ENCODE measurements at regions of chr15 and their contacts with region 1.

Region 1: GRCh38 chr15:40098489-40099261 is 10.0 kb downstream of the BMF start:
- DNase-seq: peak; percentile 89
- H3K4me3 ChIP-seq: peak overlapping the region; percentile 47
- H3K27ac ChIP-seq: peak overlapping the region; percentile 85
- H3K4me1 ChIP-seq: peaks cover 91% of the 10 kb centered on the region
- CTCF ChIP-seq: no peak

Region 2: GRCh38 chr15:39878406-39878785 is 220.3 kb before region 1 on chr15:
- CTCF ChIA-PET with region 1: no interaction called
- POLR2A ChIA-PET with region 1: no interaction called
- intact Hi-C with region 1: no loop called
- DNase-seq: no peak
- H3K4me3 ChIP-seq: no peak overlapping the region
- H3K27ac ChIP-seq: no peak overlapping the region
- H3K4me1 ChIP-seq: no peaks in the 10 kb centered on the region
- CTCF ChIP-seq: no peak

Region 3: DNA sequence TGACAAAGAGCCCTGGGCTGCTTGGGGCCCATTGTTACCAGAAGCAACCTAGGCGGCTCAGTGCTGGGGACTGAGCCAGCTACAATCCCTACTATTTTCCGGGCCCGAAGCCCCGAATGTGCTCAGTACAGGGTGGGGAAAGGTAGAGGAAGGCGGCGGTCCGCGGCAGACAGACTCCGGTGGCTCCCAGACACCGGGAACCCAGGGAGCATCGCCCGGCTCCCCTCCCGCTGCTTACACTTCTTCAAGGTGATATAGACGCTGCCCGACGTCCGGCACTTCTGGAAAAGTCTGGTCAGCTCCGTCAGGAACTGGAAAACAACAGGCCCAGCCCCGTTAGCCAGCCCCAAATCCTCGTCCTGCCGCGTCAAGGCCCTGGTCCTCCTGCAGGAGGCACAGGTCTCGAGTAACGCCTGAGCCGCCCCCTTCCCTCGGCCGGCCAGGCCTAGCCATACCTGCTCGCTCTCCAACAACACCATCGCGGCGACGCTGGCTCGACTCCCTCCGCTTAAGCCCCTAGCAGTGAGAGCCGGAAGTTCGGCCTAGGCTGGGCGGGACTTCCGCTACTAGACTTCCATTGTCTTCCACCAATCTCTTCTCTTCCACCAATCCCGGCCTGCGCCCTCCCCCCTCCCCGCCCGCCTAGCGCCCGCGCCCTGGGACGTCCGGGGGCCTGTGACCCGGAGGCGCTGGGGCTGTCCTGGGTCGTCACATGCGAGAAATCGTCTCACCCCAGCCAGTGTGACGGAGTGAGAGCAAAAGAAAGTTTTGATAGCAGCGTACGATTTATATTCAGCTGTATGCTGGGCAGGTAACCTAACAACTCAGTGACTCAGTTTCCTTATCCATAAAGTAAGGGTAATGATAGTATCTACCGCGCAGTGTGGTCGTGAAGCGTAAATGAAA is 59.8 kb before region 1 on chr15 and contains the start of gene SRP14:
- CTCF ChIA-PET with region 1: no interaction called
- POLR2A ChIA-PET with region 1: interaction called, 14 read pairs
- intact Hi-C with region 1: no loop called
- DNase-seq: peak; percentile 96
- H3K4me3 ChIP-seq: peak within 1 kb of the TSS; percentile 94
- H3K27ac ChIP-seq: peak within 1 kb of the TSS; percentile 55
- H3K4me1 ChIP-seq: peaks cover 25% of the 10 kb centered on the region
- CTCF ChIP-seq: no peak
- total RNA-seq, gene SRP14: 188 and 250 TPM in 2 replicates

Region 4: GRCh38 chr15:40054605-40055545 is 43.8 kb before region 1 on chr15:
- CTCF ChIA-PET with region 1: interaction called, 7 read pairs
- POLR2A ChIA-PET with region 1: interaction called, 10 read pairs
- intact Hi-C with region 1: loop called (anchors 2 kb)
- DNase-seq: peak; percentile 86
- H3K4me3 ChIP-seq: peak overlapping the region; percentile 22
- H3K27ac ChIP-seq: peak overlapping the region; percentile 31
- H3K4me1 ChIP-seq: peaks cover 62% of the 10 kb centered on the region
- CTCF ChIP-seq: no peak

Region 5: GRCh38 chr15:40069178-40070165 is 29.2 kb before region 1 on chr15:
- CTCF ChIA-PET with region 1: interaction called, 3 read pairs
- POLR2A ChIA-PET with region 1: interaction called, 10 read pairs
- intact Hi-C with region 1: loop called (anchors 1 kb)
- DNase-seq: peak; percentile 73
- H3K4me3 ChIP-seq: peak overlapping the region; percentile 38
- H3K27ac ChIP-seq: no peak overlapping the region
- H3K4me1 ChIP-seq: peaks cover 39% of the 10 kb centered on the region
- CTCF ChIP-seq: no peak

Region 6: DNA sequence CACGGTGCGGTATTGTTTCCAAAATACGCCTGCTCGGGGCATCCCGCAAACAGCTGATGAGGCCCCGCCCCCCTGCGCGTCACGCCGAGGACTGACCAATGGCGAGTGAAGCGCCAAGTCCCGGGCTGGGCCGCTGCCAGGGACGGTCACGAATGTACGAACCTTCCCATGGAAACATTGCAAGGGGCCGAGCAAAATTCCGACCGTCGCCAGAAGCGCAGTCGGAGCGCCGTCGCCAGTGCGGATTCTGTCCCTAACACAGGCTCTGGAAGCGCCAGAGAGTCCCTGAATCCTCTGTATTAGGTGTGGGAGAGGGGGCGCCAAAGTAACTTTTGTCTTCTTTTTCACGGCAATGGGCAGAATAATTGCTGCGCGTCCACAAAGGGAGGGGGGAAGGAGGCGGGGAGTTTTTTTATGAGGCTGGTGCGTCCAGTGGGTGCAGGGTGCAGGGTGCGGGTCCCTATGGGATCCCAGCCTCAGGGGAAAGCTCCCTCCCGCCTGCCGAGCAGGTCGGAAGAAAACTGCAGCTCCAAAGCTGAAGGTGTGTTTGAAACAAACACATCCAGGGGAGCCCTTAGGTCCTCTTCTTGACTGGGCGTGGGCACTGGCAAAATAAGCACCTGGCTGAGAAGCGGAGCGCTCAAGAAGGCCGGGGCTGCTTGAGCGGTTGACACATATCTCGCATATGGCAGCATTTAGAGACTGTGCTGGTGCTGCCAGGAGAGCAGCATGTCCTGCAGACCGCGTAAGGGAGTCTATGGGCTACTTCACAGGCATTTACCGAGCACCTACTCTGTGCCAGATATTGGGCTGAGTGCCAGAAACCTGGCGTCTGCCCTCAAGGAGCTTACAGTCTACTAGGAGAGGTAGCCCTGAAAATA is 10.4 kb after region 1 on chr15 and contains the start of gene BMF:
- CTCF ChIA-PET with region 1: interaction called, 24 read pairs
- POLR2A ChIA-PET with region 1: interaction called, 146 read pairs
- intact Hi-C with region 1: no loop called
- DNase-seq: peak; percentile 98
- H3K4me3 ChIP-seq: peak within 1 kb of the TSS; percentile 77
- H3K27ac ChIP-seq: peak within 1 kb of the TSS; percentile 68
- H3K4me1 ChIP-seq: peaks cover 72% of the 10 kb centered on the region
- CTCF ChIP-seq: peak; percentile 68
- total RNA-seq, gene BMF: 4.8 and 5.3 TPM in 2 replicates

Region 7: DNA sequence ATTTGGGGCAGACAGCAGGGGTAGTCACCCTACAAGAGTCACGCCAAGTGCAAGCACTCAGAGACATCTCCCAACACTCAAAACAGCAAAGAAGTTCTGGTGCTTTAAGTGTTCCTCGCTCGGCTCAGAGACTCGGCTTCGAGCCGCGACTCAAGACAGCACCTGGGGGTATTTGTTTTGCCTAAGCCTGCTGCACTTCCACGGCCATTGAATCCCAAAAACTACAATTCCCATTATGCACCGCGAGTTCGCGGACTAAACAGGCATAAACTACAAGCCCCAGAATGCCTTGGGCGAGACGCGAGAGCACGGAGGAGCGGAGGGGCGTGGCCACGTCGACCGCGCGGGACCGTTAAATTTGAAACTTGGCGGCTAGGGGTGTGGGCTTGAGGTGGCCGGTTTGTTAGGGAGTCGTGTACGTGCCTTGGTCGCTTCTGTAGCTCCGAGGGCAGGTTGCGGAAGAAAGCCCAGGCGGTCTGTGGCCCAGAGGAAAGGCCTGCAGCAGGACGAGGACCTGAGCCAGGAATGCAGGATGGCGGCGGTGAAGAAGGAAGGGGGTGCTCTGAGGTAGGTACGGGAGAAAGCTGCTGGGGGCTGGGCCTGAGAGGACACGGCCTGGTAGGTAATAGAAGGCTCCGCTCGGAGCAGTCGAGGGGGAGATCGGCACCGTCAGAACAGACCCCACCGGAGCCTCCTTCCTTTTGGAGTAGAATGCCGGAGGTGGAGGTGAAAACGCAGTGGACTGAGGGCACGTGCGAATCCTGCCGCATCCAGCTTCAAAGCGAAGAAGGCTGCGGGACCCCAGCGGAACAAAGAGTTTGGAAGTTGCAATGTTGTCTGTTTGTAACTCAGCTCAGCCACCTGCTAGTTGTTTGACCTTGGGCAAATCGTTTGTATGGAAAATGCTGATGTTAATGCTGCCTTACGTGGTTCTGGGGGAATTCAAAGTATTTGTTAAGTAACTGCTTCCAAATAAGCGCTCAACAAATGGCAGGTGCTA is 62.3 kb after region 1 on chr15 and contains the start of gene BUB1B:
- CTCF ChIA-PET with region 1: no interaction called
- POLR2A ChIA-PET with region 1: interaction called, 28 read pairs
- intact Hi-C with region 1: no loop called
- DNase-seq: peak; percentile 97
- H3K4me3 ChIP-seq: peak within 1 kb of the TSS; percentile 91
- H3K27ac ChIP-seq: peak within 1 kb of the TSS; percentile 68
- H3K4me1 ChIP-seq: peaks cover 28% of the 10 kb centered on the region
- CTCF ChIP-seq: no peak
- total RNA-seq, gene BUB1B: 192 and 215 TPM in 2 replicates

Region 8: GRCh38 chr15:40290918-40291574 is 192.4 kb after region 1 on chr15:
- CTCF ChIA-PET with region 1: no interaction called
- POLR2A ChIA-PET with region 1: no interaction called
- intact Hi-C with region 1: no loop called
- DNase-seq: no peak
- H3K4me3 ChIP-seq: no peak overlapping the region
- H3K27ac ChIP-seq: no peak overlapping the region
- H3K4me1 ChIP-seq: peaks cover 7% of the 10 kb centered on the region
- CTCF ChIP-seq: no peak

Measured in OCI-LY7 (cell line).